ENCODE measurements at regions of chr3 and their contacts with region 1.

Region 1: DNA sequence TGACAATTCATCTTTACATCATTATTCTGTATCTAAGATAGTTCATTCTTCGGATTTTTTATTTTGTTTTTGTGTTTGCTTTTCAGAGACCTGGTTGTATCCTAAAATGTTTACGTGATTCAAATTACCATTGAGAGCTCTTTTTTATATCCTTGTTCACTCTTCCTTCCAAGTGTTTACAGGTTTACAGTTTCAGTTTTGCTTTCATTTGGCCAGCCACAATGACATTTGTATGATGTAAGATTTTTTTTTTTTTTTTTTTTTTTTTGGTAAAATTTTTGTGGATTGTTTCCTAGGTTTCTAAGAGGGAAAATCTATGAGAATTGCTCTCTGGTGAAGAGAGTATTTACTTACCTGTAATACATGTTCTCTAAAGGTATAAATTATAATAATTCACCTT is 55.0 kb downstream of the SETD5 start:
- DNase-seq: no peak
- ATAC-seq: no peak
- H3K4me3 ChIP-seq: no peak overlapping the region
- H3K27ac ChIP-seq: no peak overlapping the region
- H3K4me1 ChIP-seq: no peaks in the 10 kb centered on the region
- H3K27me3 ChIP-seq: no peaks in the 10 kb centered on the region

Region 2: DNA sequence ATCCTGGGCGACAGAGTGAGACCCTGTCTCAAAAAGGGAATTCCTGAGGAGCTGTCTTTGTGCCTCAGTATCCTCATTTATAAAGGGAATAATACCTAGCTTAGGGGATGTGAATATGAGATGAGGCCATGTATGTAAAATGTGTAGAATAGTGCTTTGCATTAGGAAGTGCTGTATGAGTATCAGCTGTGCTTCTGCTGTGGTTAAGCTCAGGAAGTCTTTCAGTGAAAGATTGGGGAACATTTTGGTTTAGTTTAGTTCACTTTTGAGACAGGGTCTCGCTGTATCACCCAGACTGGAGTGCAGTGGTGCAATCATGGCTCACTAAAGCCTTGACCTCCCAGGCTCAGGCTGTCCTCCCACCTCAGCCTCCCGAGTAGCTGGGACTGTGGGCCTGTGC is 79.0 kb before region 1 on chr3:
- intact Hi-C with region 1: loop called in 2 of 4 experiments (anchors 5 kb)
- DNase-seq: no peak
- ATAC-seq: no peak
- H3K4me3 ChIP-seq: no peak overlapping the region
- H3K27ac ChIP-seq: no peak overlapping the region
- H3K4me1 ChIP-seq: no peaks in the 10 kb centered on the region
- H3K27me3 ChIP-seq: no peaks in the 10 kb centered on the region

Region 3: GRCh38 chr3:9379327-9379726 is 73.1 kb before region 1 on chr3:
- intact Hi-C with region 1: loop called in 2 of 4 experiments (anchors 5 kb)
- DNase-seq: no peak
- ATAC-seq: no peak
- H3K4me3 ChIP-seq: no peak overlapping the region
- H3K27ac ChIP-seq: no peak overlapping the region
- H3K4me1 ChIP-seq: no peaks in the 10 kb centered on the region
- H3K27me3 ChIP-seq: no peaks in the 10 kb centered on the region

Region 4: DNA sequence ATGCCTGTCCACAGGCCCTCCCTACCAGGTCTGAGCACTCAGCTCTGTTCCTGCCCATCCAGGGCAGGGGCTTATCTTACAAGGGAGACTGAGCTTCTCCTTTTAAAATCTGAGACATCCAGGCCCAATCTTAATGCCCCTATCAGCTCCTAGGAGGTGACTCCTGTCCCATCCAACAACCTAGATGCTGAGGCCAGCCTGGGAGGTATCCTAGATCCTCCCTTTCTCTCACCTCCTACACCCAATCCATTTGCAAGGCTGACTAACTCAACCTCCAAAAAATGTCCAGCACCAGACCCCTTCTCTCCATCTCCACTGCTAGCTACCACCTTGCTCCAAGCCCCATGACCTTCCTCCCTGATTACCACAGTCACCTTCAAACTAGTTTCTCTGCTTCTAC is 83.8 kb after region 1 on chr3:
- intact Hi-C with region 1: no loop called
- DNase-seq: no peak
- ATAC-seq: no peak
- H3K4me3 ChIP-seq: no peak overlapping the region
- H3K27ac ChIP-seq: no peak overlapping the region
- H3K4me1 ChIP-seq: no peaks in the 10 kb centered on the region
- H3K27me3 ChIP-seq: no peaks in the 10 kb centered on the region